ENCODE measurements at regions of chr3 and their contacts with region 1.

Region 1: GRCh38 chr3:12891985-12892839 is 50.8 kb upstream of the RPL32 start:
- DNase-seq: peak; percentile 64
- ATAC-seq: peak; percentile 58
- H3K4me3 Mint-ChIP-seq: no peak overlapping the region
- H3K27ac Mint-ChIP-seq: no peak overlapping the region
- H3K4me1 Mint-ChIP-seq: peaks cover 9% of the 10 kb centered on the region
- H3K27me3 Mint-ChIP-seq: peaks cover 12% of the 10 kb centered on the region

Region 2: DNA sequence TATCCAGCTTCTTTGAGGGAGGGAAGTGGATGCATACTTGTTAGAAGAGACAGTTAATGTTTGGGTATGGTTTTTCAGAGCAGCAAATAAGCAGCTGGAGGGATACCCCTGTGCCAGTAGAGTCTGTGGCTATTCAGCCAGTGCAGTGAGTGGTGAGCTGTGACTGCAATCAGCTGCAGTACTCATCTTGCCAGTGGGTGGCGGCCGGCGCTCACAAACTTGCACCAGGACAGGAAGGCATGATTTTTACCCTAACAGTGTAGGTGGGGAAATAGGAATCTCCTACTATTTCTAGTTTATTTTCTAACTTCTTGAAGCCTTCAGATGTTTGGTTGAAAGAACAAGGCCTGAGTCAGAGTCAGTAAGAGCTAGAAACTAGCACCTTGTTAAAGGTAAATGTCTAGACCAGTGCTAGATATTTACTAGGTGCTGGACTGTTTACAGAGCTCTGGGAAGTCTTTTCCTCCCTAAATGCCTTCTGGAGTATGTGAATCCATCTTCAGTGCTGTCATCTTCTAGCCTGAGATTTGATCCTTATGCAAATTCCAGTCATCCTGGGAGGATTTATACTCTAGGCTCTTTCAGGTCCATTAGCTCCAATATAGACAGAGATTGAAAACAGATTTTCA is 757.1 kb before region 1 on chr3:
- CTCF ChIA-PET with region 1: no interaction called
- POLR2A ChIA-PET with region 1: no interaction called
- intact Hi-C with region 1: loop called in 1 of 2 experiments (anchors 5 kb)
- DNase-seq: peak; percentile 85
- ATAC-seq: peak; percentile 91
- H3K4me3 Mint-ChIP-seq: no peak overlapping the region
- H3K27ac Mint-ChIP-seq: no peak overlapping the region
- H3K4me1 Mint-ChIP-seq: no peaks in the 10 kb centered on the region
- H3K27me3 Mint-ChIP-seq: peaks cover 14% of the 10 kb centered on the region

Region 3: DNA sequence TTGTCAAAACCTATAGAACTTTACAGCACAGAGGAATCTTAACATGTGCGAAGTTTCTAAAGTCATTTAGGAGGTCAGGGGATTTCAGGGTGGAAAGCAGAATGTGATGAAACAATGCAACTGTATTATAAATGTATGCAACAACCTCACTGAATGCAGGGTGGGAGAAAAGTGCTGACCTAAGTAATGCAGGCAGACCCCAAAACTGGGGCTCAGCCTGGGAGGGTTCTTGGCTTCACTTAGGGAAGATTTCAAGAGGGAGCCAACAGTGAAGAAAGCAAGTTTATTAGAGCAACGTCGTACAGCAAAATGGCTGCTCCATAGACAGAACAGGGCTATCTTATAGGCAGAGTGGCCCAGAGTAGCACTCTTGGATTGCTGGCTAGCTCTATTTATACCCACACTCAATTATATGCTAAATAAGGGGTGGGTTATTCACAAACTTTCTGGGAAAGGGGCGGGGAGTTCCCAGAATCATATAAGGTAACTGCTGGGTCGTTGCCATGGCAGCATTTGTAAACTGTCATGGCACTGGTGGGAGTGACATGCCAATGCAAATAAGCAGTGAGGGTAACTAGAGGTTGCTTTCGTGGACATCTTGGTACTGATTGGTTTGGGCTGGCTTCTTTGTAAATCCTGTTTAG is 109.9 kb before region 1 on chr3:
- CTCF ChIA-PET with region 1: interaction called, 21 read pairs
- POLR2A ChIA-PET with region 1: no interaction called
- intact Hi-C with region 1: loop called (anchors 1 to 2 kb)
- DNase-seq: peak; percentile 37
- ATAC-seq: no peak
- H3K4me3 Mint-ChIP-seq: no peak overlapping the region
- H3K27ac Mint-ChIP-seq: no peak overlapping the region
- H3K4me1 Mint-ChIP-seq: no peaks in the 10 kb centered on the region
- H3K27me3 Mint-ChIP-seq: peaks cover 16% of the 10 kb centered on the region

Region 4: GRCh38 chr3:12868039-12869034 is 23.9 kb before region 1 on chr3:
- CTCF ChIA-PET with region 1: interaction called, 5 read pairs
- POLR2A ChIA-PET with region 1: no interaction called
- intact Hi-C with region 1: loop called (anchors 1 kb)
- DNase-seq: peak; percentile 79
- ATAC-seq: peak; percentile 88
- H3K4me3 Mint-ChIP-seq: peak overlapping the region; percentile 72
- H3K27ac Mint-ChIP-seq: peak overlapping the region; percentile 71
- H3K4me1 Mint-ChIP-seq: peaks cover 9% of the 10 kb centered on the region
- H3K27me3 Mint-ChIP-seq: peaks cover 8% of the 10 kb centered on the region

Region 5: GRCh38 chr3:12984023-12984823 is 92.0 kb after region 1 on chr3:
- CTCF ChIA-PET with region 1: interaction called, 4 read pairs
- POLR2A ChIA-PET with region 1: no interaction called
- intact Hi-C with region 1: loop called in 1 of 2 experiments (anchors 5 kb)
- DNase-seq: peak; percentile 78
- ATAC-seq: peak; percentile 90
- H3K4me3 Mint-ChIP-seq: no peak overlapping the region
- H3K27ac Mint-ChIP-seq: peak overlapping the region; percentile 57
- H3K4me1 Mint-ChIP-seq: peaks cover 30% of the 10 kb centered on the region
- H3K27me3 Mint-ChIP-seq: no peaks in the 10 kb centered on the region